ENCODE measurements at regions of chr6 and their contacts with region 1.

Region 1: GRCh38 chr6:53335208-53335994 is 13.3 kb downstream of the ELOVL5 start:
- DNase-seq: peak; percentile 59
- CTCF ChIP-seq: no peak

Region 2: DNA sequence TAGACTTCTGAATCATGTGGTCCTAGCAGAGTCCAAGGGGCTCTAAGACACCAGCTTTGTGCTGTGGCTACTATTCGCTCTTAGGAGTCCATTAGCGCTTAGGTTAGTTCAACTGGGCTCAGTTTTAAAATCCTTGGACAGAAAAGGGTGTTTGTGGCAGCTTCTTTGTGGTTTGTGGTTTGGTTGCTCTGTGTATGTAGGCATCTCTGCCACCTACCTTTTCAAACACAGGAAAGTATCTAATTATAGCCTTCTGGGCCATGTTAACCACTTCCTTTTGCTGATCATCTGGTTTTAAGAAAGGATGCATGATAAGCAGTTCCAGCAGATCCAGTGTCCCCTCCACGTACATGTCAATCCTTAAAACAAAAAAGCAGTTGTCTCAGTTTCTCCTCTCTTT is 351.2 kb before region 1 on chr6:
- CTCF ChIA-PET with region 1: no interaction called
- POLR2A ChIA-PET with region 1: no interaction called
- DNase-seq: no peak
- CTCF ChIP-seq: no peak

Region 3: GRCh38 chr6:53029257-53029656 is 306.1 kb before region 1 on chr6:
- CTCF ChIA-PET with region 1: no interaction called
- POLR2A ChIA-PET with region 1: no interaction called
- DNase-seq: no peak
- CTCF ChIP-seq: no peak

Region 4: DNA sequence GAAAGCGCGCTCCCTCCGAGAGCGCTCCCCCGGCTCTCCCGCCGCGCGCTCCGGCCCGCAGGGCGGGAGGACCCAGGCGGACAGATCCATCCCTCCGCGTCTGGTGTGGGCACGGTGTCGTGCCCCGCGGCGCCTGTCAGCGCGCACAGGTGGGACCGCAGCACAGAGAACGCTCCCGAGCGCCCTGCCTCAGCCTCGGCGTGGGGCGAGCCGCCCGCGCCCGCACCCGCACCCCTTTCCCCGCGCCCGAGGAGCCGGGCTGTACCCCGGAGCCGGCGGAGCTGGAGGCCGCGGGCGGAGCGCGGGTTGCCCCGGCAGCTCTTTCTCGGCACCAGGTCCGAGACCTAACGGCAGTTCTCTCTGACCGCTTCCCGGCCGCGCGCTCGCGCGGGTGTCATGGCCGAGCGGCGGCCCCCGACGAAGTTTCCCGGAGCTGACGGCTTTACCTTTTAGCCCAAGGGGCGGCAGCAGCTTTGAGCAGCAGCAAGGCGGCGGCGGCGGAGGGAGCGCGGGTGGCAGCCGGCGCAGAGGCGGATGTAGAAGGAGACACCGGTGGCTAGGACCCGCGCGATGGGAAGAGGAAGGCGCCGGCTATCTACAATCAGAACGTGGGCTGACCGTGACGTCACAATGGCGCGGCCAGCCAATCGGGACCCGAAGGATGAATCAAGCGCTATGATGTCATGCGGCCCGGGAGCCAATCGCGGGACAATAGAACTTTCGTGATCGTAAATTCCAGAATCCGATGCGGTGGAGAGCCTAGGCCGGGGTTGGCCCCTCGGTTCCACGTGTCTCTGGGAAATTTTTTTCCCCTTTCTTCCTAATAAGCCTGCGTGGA is 13.2 kb after region 1 on chr6 and contains the start of gene ELOVL5:
- CTCF ChIA-PET with region 1: interaction called, 25 read pairs
- POLR2A ChIA-PET with region 1: interaction called, 4 read pairs
- DNase-seq: peak; percentile 86
- CTCF ChIP-seq: no peak

Measured in GM10248 (cell line).